Right ventricle myocardium inferior (tissue), 1 donor: ENCODE measurements at regions of chr16 and their contacts with region 1.

Region 1: DNA sequence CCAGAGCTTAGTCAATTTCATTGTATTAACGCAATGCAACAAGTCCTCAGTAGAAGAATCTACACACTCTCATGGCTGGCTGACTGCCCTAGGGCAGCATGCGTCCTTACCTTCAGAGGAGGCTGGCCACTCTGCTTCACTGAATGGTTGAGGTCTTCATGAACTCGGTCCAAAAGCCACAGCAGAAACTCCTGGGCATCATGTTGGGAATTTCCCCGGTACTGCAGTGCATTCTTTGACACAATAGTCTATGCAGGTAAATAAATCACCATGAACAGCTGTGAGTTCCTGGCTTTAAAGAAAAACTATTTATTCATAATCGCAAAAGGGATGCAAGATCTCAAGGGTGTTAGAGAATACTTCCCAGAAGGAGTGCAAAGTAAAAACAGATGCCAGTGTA is 41.3 kb downstream of the USP31 start:
- DNase-seq: no peak
- ATAC-seq: peak; percentile 56

Region 2: GRCh38 chr16:23048159-23048558 is 59.8 kb before region 1 on chr16:
- intact Hi-C with region 1: no loop called
- DNase-seq: no peak
- ATAC-seq: no peak

Region 3: DNA sequence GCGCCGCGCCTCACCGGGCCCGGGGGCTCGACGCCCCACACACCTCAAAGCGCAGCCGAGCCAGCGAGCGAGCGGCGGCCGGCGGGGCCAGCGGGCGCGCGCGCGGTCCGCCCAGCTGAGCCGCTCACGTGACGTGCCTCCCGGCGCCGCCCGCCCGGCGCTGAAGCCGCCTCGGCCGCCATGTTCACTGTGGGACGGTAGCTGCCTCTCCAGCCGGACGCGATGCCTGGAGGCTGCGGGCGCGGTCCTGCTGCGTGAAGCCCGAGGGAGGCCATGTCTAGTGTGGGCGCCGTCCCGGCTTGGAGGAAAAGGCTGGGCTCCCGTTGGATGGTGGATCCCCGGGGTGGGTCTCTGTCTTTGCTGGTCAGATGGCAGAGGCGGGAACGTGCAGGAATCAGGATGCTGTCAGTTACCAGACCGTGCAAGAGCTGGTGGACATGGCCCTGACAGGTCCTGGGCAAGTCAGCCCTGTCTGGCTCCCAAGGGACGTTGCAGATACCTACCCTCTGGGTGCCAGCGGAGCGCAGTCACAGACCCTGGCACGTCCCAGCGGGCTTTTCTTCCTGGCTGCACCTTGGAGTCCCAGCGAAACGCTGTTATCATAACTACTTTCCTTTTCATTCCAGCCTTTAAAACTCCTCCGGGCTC is 41.5 kb after region 1 on chr16 and contains the start of gene USP31:
- intact Hi-C with region 1: loop called (anchors 5 kb)
- DNase-seq: peak; percentile 98
- ATAC-seq: peak; percentile 98
- total RNA-seq, gene USP31: 26.8 TPM

Region 4: GRCh38 chr16:23207493-23207892 is 99.6 kb after region 1 on chr16:
- intact Hi-C with region 1: no loop called
- DNase-seq: no peak
- ATAC-seq: no peak

Region 5: GRCh38 chr16:23269248-23269953 is 161.5 kb after region 1 on chr16:
- intact Hi-C with region 1: no loop called
- DNase-seq: no peak
- ATAC-seq: no peak